ENCODE measurements at regions of chr14 and their contacts with region 1.

Region 1: GRCh38 chr14:101761032-101761880 is at the start of gene PPP2R5C:
- DNase-seq: peak; percentile 94
- ATAC-seq: peak; percentile 65
- H3K4me3 Mint-ChIP-seq: peak within 1 kb of the TSS; percentile 85
- H3K27ac Mint-ChIP-seq: peak within 1 kb of the TSS; percentile 78
- H3K4me1 Mint-ChIP-seq: peaks cover 43% of the 10 kb centered on the region
- H3K27me3 Mint-ChIP-seq: no peaks in the 10 kb centered on the region
- total RNA-seq, gene PPP2R5C: 232 to 281 TPM

Region 2: GRCh38 chr14:101721951-101722661 is 39.1 kb before region 1 on chr14:
- CTCF ChIA-PET with region 1: interaction called, 3 read pairs
- POLR2A ChIA-PET with region 1: no interaction called
- intact Hi-C with region 1: loop called in 1 of 2 experiments (anchors 2 kb)
- DNase-seq: peak; percentile 78
- ATAC-seq: peak; percentile 90
- H3K4me3 Mint-ChIP-seq: peak overlapping the region; percentile 74
- H3K27ac Mint-ChIP-seq: peak overlapping the region; percentile 99
- H3K4me1 Mint-ChIP-seq: peaks cover 48% of the 10 kb centered on the region
- H3K27me3 Mint-ChIP-seq: no peaks in the 10 kb centered on the region

Region 3: GRCh38 chr14:101731187-101732080 is 29.8 kb before region 1 on chr14:
- CTCF ChIA-PET with region 1: interaction called, 6 read pairs
- POLR2A ChIA-PET with region 1: interaction called, 6 read pairs
- intact Hi-C with region 1: loop called (anchors 1 kb)
- DNase-seq: peak; percentile 94
- ATAC-seq: peak; percentile 92
- H3K4me3 Mint-ChIP-seq: peak overlapping the region; percentile 66
- H3K27ac Mint-ChIP-seq: peak overlapping the region; percentile 97
- H3K4me1 Mint-ChIP-seq: peaks cover 64% of the 10 kb centered on the region
- H3K27me3 Mint-ChIP-seq: no peaks in the 10 kb centered on the region

Measured in activated CD4-positive, alpha-beta T cell treated with anti-CD3 and anti-CD28 coated beads for 36 hours (primary cell).